Activated CD4-positive, alpha-beta T cell treated with anti-CD3 and anti-CD28 coated beads for 36 hours (primary cell): ENCODE measurements at regions of chrX and their contacts with region 1.

Region 1: DNA sequence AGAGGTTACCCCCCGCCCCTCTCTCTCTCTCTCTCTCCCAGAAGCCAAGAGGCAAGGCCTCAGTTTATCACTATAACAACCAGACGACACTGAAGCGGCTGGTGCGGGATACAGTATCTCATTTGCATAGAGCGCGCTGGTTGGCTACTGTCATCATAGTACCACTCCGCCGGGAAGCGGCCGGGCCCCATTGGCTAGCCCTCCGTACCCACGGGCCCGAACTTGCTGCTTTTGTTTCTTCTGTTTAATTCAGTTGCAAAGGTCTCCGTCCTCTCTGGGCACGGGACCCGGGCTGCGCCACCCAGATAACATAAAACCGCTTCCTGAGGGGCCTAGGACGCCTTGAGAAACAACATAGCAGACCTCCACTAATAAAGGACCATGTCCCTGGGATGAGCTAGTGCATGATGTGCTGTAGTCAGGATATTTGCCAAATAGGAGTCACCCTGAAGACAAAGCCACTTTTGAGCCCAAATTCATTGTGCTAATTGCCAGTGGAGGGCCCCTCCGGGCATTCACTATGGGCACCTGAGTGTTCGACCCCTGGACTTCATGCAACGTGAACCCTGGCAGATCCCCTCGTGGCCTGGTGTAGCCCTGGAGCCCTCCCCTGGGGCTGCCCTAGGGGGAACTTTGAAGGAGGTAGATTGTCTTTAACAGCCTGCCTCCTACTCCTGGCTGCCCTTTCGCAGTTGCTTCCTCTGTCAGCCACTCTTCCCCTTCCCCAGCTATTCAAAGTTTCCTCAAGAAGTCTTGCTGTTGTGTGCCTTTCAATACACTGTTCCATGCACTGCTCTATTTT is at the start of gene PCYT1B:
- DNase-seq: peak; percentile 76
- ATAC-seq: peak; percentile 99
- H3K4me3 Mint-ChIP-seq: peak within 1 kb of the TSS; percentile 59
- H3K27ac Mint-ChIP-seq: peak within 1 kb of the TSS; percentile 69
- H3K4me1 Mint-ChIP-seq: peaks cover 22% of the 10 kb centered on the region
- H3K27me3 Mint-ChIP-seq: peaks cover 12% of the 10 kb centered on the region
- total RNA-seq, gene PCYT1B: 0.43 to 0.44 TPM

Region 2: DNA sequence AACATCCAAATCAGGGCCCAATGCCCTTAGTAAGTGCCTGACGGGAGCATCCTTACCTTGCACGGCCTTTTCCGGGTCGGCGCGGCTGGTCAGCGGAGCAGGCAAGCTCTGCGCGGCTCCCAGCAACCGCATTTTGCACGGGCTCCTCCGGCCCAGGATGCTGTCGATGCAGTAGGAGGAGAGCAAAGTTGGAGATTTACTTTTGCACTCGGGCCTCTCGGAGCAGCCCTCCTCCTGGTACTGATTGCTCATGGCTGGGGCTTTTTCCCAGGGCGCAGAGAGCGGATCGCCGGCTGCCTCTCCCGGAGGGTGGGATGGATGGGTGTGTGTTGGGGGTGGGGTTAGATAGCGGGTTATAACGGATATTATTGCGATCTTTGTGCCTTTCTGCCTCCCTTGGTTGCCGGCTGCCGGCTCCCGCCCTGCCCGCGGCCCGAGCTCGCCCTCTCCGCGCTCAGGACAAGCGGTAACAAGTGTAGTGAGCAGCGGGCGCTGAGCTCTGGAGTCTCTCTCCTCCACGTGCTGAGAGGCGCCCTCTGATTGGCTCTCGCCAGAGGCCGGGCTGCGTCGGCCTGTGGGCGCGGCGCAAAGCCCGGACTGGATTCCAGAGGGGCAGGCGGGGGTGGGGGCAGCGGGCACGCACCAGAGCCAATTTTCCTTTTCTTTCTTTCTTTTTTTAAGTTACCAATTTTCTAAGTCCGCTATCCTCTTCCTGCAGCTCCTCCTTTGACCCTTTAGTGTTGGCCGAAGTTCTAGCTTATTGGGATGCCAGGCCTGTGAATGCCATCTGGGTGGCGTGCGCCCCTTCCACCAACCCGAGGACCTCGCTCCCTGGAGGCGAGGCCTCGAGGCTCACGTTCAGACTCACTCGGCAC is 368.3 kb after region 1 on chrX and contains the start of gene ARX:
- CTCF ChIA-PET with region 1: no interaction called
- POLR2A ChIA-PET with region 1: no interaction called
- intact Hi-C with region 1: loop called in 1 of 2 experiments (anchors 10 kb)
- DNase-seq: peak; percentile 72
- ATAC-seq: peak; percentile 83
- H3K4me3 Mint-ChIP-seq: no peak within 1 kb of the TSS
- H3K27ac Mint-ChIP-seq: no peak within 1 kb of the TSS
- H3K4me1 Mint-ChIP-seq: peaks cover 12% of the 10 kb centered on the region
- H3K27me3 Mint-ChIP-seq: peaks cover 46% of the 10 kb centered on the region
- total RNA-seq, gene ARX: not detected